Thyroid gland (tissue), 4 donors: ENCODE measurements at regions of chr6 and their contacts with region 1.

Region 1: DNA sequence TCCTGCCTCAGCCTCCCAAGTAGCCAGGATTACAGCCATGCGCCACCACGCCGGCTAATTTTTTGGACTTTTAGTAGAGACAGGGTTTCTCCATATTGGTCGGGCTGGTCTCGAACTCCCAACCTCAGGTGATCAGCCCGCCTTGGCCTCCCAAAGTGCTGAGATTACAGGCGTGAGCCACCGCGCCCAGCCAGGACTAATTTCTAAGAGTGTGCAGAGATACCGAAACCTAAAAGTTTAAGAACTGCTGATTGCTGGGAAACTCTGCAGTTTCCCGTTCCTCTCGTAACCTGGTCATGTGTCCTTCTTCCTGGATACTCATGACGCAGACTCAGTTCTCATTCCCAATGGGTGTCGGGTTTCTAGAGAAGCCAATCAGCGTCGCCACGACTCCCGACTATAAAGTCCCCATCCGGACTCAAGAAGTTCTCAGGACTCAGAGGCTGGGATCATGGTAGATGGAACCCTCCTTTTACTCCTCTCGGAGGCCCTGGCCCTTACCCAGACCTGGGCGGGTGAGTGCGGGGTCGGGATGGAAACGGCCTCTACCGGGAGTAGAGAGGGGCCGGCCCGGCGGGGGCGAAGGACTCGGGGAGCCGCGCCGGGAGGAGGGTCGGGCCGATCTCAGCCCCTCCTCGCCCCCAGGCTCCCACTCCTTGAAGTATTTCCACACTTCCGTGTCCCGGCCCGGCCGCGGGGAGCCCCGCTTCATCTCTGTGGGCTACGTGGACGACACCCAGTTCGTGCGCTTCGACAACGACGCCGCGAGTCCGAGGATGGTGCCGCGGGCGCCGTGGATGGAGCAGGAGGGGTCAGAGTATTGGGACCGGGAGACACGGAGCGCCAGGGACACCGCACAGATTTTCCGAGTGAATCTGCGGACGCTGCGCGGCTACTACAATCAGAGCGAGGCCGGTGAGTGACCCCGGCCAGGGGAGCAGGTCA is at the start of gene HLA-E:
- DNase-seq: peak; percentile 92 to 94
- H3K4me3 ChIP-seq: peak within 1 kb of the TSS; percentile 52 to 91 (median 80)
- H3K27ac ChIP-seq: peak within 1 kb of the TSS; percentile 91 to 96 (median 94)
- H3K4me1 ChIP-seq: peaks cover 4 to 24% of the 10 kb centered on the region in 2 donors
- H3K27me3 ChIP-seq: no peaks in the 10 kb centered on the region
- CTCF ChIP-seq: no peak
- POLR2A ChIP-seq: peak; percentile 57 to 93
- total RNA-seq, gene HLA-E: 382 to 717 (median 457) TPM

Region 2: GRCh38 chr6:30533460-30534294 is 44.3 kb after region 1 on chr6:
- intact Hi-C with region 1: loop called (anchors 5 kb)
- DNase-seq: no peak
- H3K4me3 ChIP-seq: no peak overlapping the region
- H3K27ac ChIP-seq: no peak overlapping the region
- H3K4me1 ChIP-seq: no peaks in the 10 kb centered on the region
- H3K27me3 ChIP-seq: no peaks in the 10 kb centered on the region
- CTCF ChIP-seq: no peak
- POLR2A ChIP-seq: no peak

Region 3: DNA sequence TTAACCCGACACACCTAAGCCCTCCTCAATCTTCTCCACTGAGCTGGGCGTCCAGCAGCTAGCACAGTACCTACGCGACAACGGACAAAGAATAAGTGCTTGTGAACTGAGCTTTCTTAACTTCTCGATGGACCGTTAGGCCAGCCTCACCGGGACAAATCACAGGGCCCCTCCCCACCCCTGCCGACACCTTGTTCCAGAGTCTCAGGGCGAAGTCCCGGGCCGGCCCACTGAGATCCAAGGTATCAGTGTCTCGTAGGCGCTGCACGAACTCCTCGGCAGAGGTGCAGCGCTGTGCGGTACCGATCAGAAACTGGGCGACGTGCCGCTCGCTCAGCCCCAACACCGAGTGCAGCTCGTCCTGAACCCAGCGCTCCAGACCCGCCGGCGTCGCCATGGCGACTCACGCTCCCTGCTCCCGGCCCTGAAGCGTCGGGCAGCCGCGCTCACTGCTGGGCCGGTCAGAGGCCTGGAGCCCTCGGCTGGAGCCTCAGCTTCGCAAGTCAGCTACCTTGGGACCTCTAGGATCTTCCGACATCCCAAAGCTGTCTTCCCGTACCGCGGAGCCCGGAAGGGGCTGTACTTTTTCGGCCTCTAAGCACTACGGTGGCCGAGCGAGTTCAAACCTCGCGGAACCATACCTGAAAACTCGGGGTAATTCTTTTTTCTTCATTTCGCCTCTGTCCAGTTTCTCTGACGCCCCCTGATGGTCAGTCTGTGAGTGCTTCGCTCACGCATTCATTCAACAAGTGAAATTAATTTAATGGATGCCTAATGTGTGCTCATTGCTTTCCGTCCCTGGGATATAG is 183.3 kb after region 1 on chr6 and contains the start of gene DHX16:
- intact Hi-C with region 1: loop called (anchors 10 kb)
- DNase-seq: peak; percentile 96 to 97
- H3K4me3 ChIP-seq: peak within 1 kb of the TSS; percentile 43 to 98 (median 80)
- H3K27ac ChIP-seq: peak within 1 kb of the TSS in 2 of 3 donors; percentile 14 to 53
- H3K4me1 ChIP-seq: peaks cover 9 to 28% of the 10 kb centered on the region in 2 donors
- H3K27me3 ChIP-seq: no peaks in the 10 kb centered on the region
- CTCF ChIP-seq: peak; percentile 59 to 87 (median 78)
- POLR2A ChIP-seq: peak in 1 of 2 donors; percentile 49
- total RNA-seq, gene DHX16: 25.6 to 38.8 (median 28.2) TPM